Mammary epithelial cell (primary cell): ENCODE measurements at regions of chr6 and their contacts with region 1.

Region 1: GRCh38 chr6:98845211-98846020 is 11.0 kb downstream of the POU3F2 start:
- DNase-seq: peak; percentile 58
- H3K4me3 ChIP-seq: no peak overlapping the region
- H3K27ac ChIP-seq: no peak overlapping the region
- H3K4me1 ChIP-seq: peaks cover 5% of the 10 kb centered on the region
- H3K27me3 ChIP-seq: peaks cover 50% of the 10 kb centered on the region
- CTCF ChIP-seq: peak; percentile 79 to 93

Region 2: GRCh38 chr6:97705568-97705967 is 1139.8 kb before region 1 on chr6:
- CTCF ChIA-PET with region 1: no interaction called
- dilution Hi-C with region 1: no loop called
- in situ Hi-C with region 1: no loop called
- intact Hi-C with region 1: loop called (anchors 5 kb)
- DNase-seq: no peak
- H3K4me3 ChIP-seq: no peak overlapping the region
- H3K27ac ChIP-seq: no peak overlapping the region
- H3K4me1 ChIP-seq: no peaks in the 10 kb centered on the region
- H3K27me3 ChIP-seq: no peaks in the 10 kb centered on the region
- CTCF ChIP-seq: peak; percentile 17 to 40

Region 3: GRCh38 chr6:98769544-98769943 is 75.9 kb before region 1 on chr6:
- CTCF ChIA-PET with region 1: no interaction called
- dilution Hi-C with region 1: no loop called
- in situ Hi-C with region 1: no loop called
- intact Hi-C with region 1: loop called (anchors 1 kb)
- DNase-seq: peak; percentile 20
- H3K4me3 ChIP-seq: no peak overlapping the region
- H3K27ac ChIP-seq: no peak overlapping the region
- H3K4me1 ChIP-seq: no peaks in the 10 kb centered on the region
- H3K27me3 ChIP-seq: no peaks in the 10 kb centered on the region
- CTCF ChIP-seq: peak in 1 of 2 donors; percentile 52

Region 4: GRCh38 chr6:98929498-98930060 is 84.2 kb after region 1 on chr6:
- CTCF ChIA-PET with region 1: no interaction called
- dilution Hi-C with region 1: no loop called
- in situ Hi-C with region 1: no loop called
- intact Hi-C with region 1: no loop called
- DNase-seq: no peak
- H3K4me3 ChIP-seq: no peak overlapping the region
- H3K27ac ChIP-seq: no peak overlapping the region
- H3K4me1 ChIP-seq: no peaks in the 10 kb centered on the region
- H3K27me3 ChIP-seq: no peaks in the 10 kb centered on the region
- CTCF ChIP-seq: no peak

Region 5: DNA sequence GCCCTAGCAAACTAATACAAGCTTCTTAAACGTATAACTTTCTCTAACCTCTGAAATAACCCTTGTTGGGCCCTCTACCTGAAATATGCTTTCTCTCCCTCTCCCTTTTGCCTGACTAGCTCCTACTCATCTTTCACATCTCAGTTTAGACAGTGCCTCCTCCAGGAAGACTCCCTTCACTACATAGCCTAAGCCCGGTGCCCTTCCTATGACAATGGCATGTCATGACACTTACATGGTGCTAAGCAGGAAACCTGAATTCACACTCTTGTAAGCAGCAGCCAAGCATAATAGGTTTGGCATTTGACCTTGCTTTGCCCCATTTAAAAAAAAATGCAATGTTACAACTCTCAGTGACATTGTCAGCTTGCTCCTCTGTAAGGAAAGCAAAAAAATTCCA is 135.4 kb after region 1 on chr6:
- CTCF ChIA-PET with region 1: no interaction called
- dilution Hi-C with region 1: no loop called
- in situ Hi-C with region 1: no loop called
- intact Hi-C with region 1: no loop called
- DNase-seq: no peak
- H3K4me3 ChIP-seq: no peak overlapping the region
- H3K27ac ChIP-seq: no peak overlapping the region
- H3K4me1 ChIP-seq: no peaks in the 10 kb centered on the region
- H3K27me3 ChIP-seq: no peaks in the 10 kb centered on the region
- CTCF ChIP-seq: peak in 1 of 2 donors; percentile 2

Region 6: GRCh38 chr6:99092009-99092408 is 246.6 kb after region 1 on chr6:
- CTCF ChIA-PET with region 1: no interaction called
- dilution Hi-C with region 1: no loop called
- in situ Hi-C with region 1: no loop called
- intact Hi-C with region 1: no loop called
- DNase-seq: no peak
- H3K4me3 ChIP-seq: no peak overlapping the region
- H3K27ac ChIP-seq: no peak overlapping the region
- H3K4me1 ChIP-seq: no peaks in the 10 kb centered on the region
- H3K27me3 ChIP-seq: peaks cover 16% of the 10 kb centered on the region
- CTCF ChIP-seq: no peak

Region 7: GRCh38 chr6:99119109-99120031 is 274.0 kb after region 1 on chr6:
- CTCF ChIA-PET with region 1: no interaction called
- dilution Hi-C with region 1: no loop called
- in situ Hi-C with region 1: no loop called
- intact Hi-C with region 1: loop called (anchors 1 kb)
- DNase-seq: peak; percentile 48
- H3K4me3 ChIP-seq: no peak overlapping the region
- H3K27ac ChIP-seq: no peak overlapping the region
- H3K4me1 ChIP-seq: peaks cover 7% of the 10 kb centered on the region
- H3K27me3 ChIP-seq: no peaks in the 10 kb centered on the region
- CTCF ChIP-seq: peak; percentile 58 to 66